Common myeloid progenitor, CD34-positive (primary cell): ENCODE measurements at regions of chr12 and their contacts with region 1.

Region 1: GRCh38 chr12:123250484-123251383 is 17.5 kb downstream of the MTRFR start:
- DNase-seq: peak in 2 of 3 donors; percentile 47 to 50
- H3K4me3 ChIP-seq: peak overlapping the region in 3 of 7 experiments; percentile 11 to 52 (median 28)
- H3K27ac ChIP-seq: peak overlapping the region; percentile 54 to 71
- H3K4me1 ChIP-seq: peaks cover 0 to 21% (median 15%) of the 10 kb centered on the region in 4 experiments
- H3K27me3 ChIP-seq: no peaks in the 10 kb centered on the region

Region 2: DNA sequence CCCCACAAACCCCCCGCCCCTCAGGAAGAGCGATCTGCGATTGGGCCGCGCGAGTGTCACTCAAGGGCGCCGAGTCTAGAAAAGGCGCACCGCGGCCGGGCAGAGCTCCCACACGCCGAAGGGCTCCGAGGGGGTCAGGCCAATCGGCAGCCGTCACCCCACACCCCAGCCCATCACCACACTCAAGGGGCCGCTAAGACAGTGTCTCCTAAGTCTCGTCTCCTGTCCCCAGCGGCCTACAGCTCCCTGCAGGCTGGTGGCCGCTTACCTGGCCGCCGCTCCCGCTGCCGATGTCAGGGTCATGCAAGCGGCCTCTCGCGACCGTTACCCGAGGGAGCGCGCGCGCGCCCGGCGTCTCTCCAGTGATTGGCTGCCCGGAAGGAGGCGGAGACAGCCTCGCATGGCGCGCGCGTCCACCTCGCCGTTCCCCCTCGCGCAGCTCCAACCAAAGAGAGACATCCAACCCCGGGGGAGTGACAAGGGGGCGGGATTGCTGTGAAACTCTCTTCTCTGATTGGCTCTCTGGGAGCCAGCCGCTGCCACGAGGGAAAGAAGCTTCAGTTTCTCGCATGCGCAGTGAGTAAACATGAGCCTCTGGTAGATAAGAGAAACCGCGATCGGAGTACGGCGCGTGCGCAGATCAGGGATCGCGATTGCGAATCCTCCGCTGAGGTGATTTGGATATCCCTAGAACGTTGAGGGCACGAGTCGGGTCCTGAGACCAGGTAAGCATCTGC is 17.8 kb before region 1 on chr12 and contains the starts of genes MPHOSPH9 and MTRFR:
- CTCF ChIA-PET with region 1: interaction called, 29 read pairs
- POLR2A ChIA-PET with region 1: interaction called, 4 read pairs
- DNase-seq: peak; percentile 99 to 100 (median 100)
- H3K4me3 ChIP-seq: peak within 1 kb of the TSS; percentile 82 to 99 (median 97)
- H3K27ac ChIP-seq: peak within 1 kb of the TSS; percentile 85 to 95
- H3K4me1 ChIP-seq: peaks cover 38 to 65% (median 53%) of the 10 kb centered on the region in 4 experiments
- H3K27me3 ChIP-seq: no peaks in the 10 kb centered on the region

Region 3: DNA sequence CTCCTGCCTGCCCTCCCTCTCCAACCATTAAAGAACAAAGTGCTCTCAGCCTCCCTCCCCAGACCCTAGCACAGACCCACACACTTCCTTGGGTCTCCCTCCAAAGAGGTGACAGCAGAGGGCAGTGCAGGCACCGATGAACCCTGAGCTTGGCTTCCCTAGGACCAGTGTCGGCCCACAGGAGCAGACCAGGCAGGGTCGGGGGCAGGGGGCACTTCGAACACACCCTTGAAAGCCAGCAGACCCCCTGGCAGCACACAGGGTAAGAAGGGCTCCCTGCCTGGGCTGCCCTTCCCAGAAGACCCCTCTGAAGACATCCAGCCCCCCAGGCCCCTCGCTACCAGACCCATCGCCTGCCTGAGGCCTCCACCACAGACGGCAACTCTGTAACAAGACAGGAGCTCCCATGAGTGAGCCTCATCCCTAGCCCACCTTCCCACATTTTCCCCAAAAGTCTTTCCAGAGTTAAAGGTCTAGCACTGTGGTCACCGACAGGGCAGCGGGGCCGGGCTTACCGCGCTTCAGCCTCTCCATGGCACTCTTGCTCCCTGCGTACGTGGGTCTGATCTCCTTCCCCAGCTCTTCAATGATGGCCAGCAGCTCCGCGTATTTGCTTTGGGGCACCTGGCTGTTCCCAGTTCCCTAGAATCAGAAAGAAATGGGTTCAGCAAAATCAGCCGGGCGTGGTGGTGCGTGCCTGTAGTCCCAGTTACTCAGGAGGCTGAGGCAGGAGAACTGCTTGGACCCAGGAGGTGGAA is 14.1 kb after region 1 on chr12:
- CTCF ChIA-PET with region 1: interaction called, 22 read pairs
- POLR2A ChIA-PET with region 1: no interaction called
- DNase-seq: peak in 2 of 3 donors; percentile 58 to 61
- H3K4me3 ChIP-seq: no peak overlapping the region
- H3K27ac ChIP-seq: no peak overlapping the region
- H3K4me1 ChIP-seq: peaks cover 2 to 42% (median 33%) of the 10 kb centered on the region in 4 experiments
- H3K27me3 ChIP-seq: no peaks in the 10 kb centered on the region